ENCODE measurements at regions of chr6 and their contacts with region 1.

Region 1: DNA sequence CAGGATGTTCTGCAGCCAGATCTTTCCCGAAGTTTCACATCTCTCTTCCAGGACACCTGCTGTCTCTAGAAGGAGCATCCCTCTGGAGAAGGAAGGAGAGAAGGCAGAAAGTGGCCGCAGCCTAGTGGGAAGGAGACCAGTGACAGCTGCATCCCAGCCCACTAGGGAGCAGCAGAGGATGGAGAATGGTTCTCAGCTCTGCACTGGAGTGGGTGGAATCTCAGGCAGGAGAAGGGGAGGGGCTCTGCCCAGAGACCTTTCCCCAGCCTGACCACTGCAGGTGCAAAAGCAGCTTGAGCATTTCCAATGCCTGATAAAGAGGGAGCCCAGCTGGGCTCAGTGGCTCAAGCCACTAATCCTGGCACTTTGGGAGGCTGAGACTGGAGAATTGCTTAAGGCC is 32.3 kb downstream of the NCR2 start:
- ATAC-seq: peak; percentile 11 to 66 (median 23)
- H3K4me3 ChIP-seq: no peak overlapping the region
- H3K27ac ChIP-seq: no peak overlapping the region
- H3K4me1 ChIP-seq: peaks cover 16 to 19% of the 10 kb centered on the region in 2 donors

Region 2: GRCh38 chr6:41655711-41656691 is 288.3 kb after region 1 on chr6:
- in situ Hi-C with region 1: loop called in 1 of 9 experiments (anchors 25 kb)
- ATAC-seq: peak in 7 of 8 experiments; percentile 13 to 36 (median 34)
- H3K4me3 ChIP-seq: no peak overlapping the region
- H3K27ac ChIP-seq: no peak overlapping the region
- H3K4me1 ChIP-seq: peaks cover 18 to 43% of the 10 kb centered on the region in 2 donors

Region 3: GRCh38 chr6:41683510-41684310 is 316.0 kb after region 1 on chr6:
- in situ Hi-C with region 1: loop called in 8 of 9 experiments (anchors 10 to 25 kb)
- ATAC-seq: peak; percentile 67 to 84 (median 74)
- H3K4me3 ChIP-seq: no peak overlapping the region
- H3K27ac ChIP-seq: no peak overlapping the region
- H3K4me1 ChIP-seq: peaks cover 23 to 25% of the 10 kb centered on the region in 2 donors